ENCODE measurements at regions of chr6 and their contacts with region 1.

Region 1: DNA sequence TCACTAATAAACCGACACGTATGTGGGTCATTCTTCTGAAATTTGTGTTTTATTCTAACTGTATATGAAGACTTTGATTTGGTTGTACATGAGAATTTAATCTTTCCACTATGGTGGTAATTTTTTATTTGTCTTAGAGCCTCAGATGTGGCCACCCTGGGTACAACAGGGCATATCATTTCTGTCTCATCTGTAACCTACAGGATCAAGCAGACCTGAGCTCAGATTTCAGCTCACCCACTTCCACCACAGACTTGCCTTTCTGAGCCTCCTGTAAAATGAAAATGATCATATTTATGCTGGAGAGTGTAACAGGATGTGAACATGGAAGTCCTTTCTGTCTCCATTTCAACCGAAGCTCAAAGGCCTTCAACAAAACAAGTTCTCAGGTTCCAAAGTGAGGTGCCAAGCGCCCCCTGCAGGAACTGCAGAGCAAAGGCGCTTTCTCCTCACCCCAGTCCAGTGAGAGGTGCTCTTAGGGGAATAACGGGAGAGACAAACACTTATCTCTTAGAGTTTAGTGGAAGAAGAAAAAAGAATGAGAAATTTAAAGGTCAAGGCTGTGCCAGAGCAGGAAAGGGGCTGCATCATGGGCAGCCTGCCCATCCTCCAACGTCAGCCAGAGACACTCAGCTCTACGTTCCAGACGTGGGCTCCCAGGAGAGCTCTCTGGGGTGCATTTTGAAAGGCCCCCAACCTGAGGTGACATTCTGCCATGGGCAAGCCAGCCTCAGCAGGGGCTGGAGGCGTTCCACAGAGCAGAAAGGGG is 23.0 kb upstream of the CD24 start:
- DNase-seq: peak; percentile 57
- H3K4me3 ChIP-seq: no peak overlapping the region
- H3K27ac ChIP-seq: no peak overlapping the region
- H3K4me1 ChIP-seq: no peaks in the 10 kb centered on the region
- H3K27me3 ChIP-seq: no peaks in the 10 kb centered on the region
- CTCF ChIP-seq: peak; percentile 94

Region 2: GRCh38 chr6:106360410-106360988 is 637.1 kb before region 1 on chr6 and contains the start of gene CRYBG1:
- CTCF ChIA-PET with region 1: no interaction called
- POLR2A ChIA-PET with region 1: no interaction called
- intact Hi-C with region 1: loop called (anchors 1 kb)
- DNase-seq: peak; percentile 75 to 94
- H3K4me3 ChIP-seq: peak within 1 kb of the TSS; percentile 86
- H3K27ac ChIP-seq: peak within 1 kb of the TSS; percentile 34; the same call in 1 of the 2 replicates
- H3K4me1 ChIP-seq: peaks cover 11% of the 10 kb centered on the region
- H3K27me3 ChIP-seq: no peaks in the 10 kb centered on the region
- CTCF ChIP-seq: peak; percentile 93
- total RNA-seq, gene CRYBG1: 42.7 and 49.3 TPM in 2 replicates

Region 3: GRCh38 chr6:107102414-107102990 is 104.9 kb after region 1 on chr6:
- CTCF ChIA-PET with region 1: no interaction called
- POLR2A ChIA-PET with region 1: no interaction called
- intact Hi-C with region 1: no loop called
- DNase-seq: no peak
- H3K4me3 ChIP-seq: no peak overlapping the region
- H3K27ac ChIP-seq: no peak overlapping the region
- H3K4me1 ChIP-seq: no peaks in the 10 kb centered on the region
- H3K27me3 ChIP-seq: no peaks in the 10 kb centered on the region
- CTCF ChIP-seq: no peak

Region 4: GRCh38 chr6:107114213-107114905 is 116.8 kb after region 1 on chr6:
- CTCF ChIA-PET with region 1: no interaction called
- POLR2A ChIA-PET with region 1: no interaction called
- intact Hi-C with region 1: loop called (anchors 10 kb)
- DNase-seq: peak; percentile 61 to 87
- H3K4me3 ChIP-seq: peak overlapping the region; percentile 58
- H3K27ac ChIP-seq: no peak overlapping the region
- H3K4me1 ChIP-seq: peaks cover 8% of the 10 kb centered on the region; the same call in 1 of the 2 replicates
- H3K27me3 ChIP-seq: no peaks in the 10 kb centered on the region
- CTCF ChIP-seq: peak; percentile 65

Region 5: DNA sequence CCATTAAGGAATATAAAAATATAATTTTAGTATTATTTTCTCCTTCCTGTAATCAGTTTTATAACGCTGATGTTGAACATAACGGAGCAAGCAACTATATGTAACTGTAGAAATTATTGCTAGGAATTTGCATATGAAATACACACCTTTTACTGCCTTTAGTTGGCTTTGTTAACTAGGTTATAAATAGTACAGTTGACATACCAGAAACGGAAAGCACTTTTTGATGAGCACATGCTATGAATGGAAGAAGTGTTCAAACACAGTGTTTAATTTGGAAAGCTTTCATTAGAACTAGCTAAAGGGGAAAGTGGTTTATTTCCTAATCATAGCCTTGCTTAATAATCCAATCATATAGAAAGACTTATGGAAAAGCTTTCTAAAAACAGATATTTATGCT is 143.0 kb after region 1 on chr6:
- CTCF ChIA-PET with region 1: no interaction called
- POLR2A ChIA-PET with region 1: no interaction called
- intact Hi-C with region 1: no loop called
- DNase-seq: no peak
- H3K4me3 ChIP-seq: no peak overlapping the region
- H3K27ac ChIP-seq: no peak overlapping the region
- H3K4me1 ChIP-seq: peaks cover 12% of the 10 kb centered on the region
- H3K27me3 ChIP-seq: no peaks in the 10 kb centered on the region
- CTCF ChIP-seq: no peak

Measured in PC-9 (cell line).